Activated CD4-positive, alpha-beta T cell treated with anti-CD3 and anti-CD28 coated beads, Interleukin-2, amount 10 ng/mL, durations not matched to agents 24 days and 14 days (primary cell): ENCODE measurements at regions of chr4 and their contacts with region 1.

Region 1: GRCh38 chr4:145161549-145161948 is 18.8 kb downstream of the OTUD4 start:
- DNase-seq: no peak
- H3K4me3 Mint-ChIP-seq: no peak overlapping the region
- H3K27ac Mint-ChIP-seq: peak overlapping the region; percentile 34
- H3K4me1 Mint-ChIP-seq: peaks cover 11% of the 10 kb centered on the region
- H3K27me3 Mint-ChIP-seq: no peaks in the 10 kb centered on the region

Region 2: DNA sequence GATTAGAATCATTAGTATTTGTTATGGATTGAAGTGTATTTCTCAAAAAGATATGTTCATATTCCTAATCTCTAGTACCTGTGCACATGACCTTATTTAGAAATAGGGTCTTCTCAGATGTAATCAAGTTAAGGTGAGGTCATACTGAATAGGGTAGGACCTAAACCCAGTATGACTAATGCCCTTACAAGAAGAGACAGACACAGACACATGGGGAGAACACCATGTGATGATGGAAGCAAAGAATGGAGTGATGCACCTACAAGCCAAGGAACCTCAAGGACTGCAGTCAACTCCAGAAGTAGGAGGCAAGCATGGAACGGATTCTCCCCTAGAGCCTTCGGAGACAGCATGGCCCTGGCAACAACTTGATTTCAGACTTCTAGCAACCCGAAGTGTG is 12.6 kb before region 1 on chr4:
- intact Hi-C with region 1: loop called (anchors 2 kb)
- DNase-seq: no peak
- H3K4me3 Mint-ChIP-seq: no peak overlapping the region
- H3K27ac Mint-ChIP-seq: no peak overlapping the region
- H3K4me1 Mint-ChIP-seq: peaks cover 12% of the 10 kb centered on the region
- H3K27me3 Mint-ChIP-seq: no peaks in the 10 kb centered on the region